ENCODE measurements at regions of chr2 and their contacts with region 1.

Region 1: GRCh38 chr2:120680136-120680761 is 55.4 kb upstream of the GLI2 start:
- DNase-seq: peak; percentile 64 to 77
- ATAC-seq: peak; percentile 82 to 85
- H3K4me3 ChIP-seq: no peak overlapping the region
- H3K27ac ChIP-seq: no peak overlapping the region
- H3K4me1 ChIP-seq: peaks cover 0 to 3% of the 10 kb centered on the region in 2 donors
- H3K27me3 ChIP-seq: peaks cover 0 to 5% (median 0%) of the 10 kb centered on the region in 3 donors
- CTCF ChIP-seq: peak; percentile 61 to 89 (median 73)
- POLR2A ChIP-seq: no peak

Region 2: DNA sequence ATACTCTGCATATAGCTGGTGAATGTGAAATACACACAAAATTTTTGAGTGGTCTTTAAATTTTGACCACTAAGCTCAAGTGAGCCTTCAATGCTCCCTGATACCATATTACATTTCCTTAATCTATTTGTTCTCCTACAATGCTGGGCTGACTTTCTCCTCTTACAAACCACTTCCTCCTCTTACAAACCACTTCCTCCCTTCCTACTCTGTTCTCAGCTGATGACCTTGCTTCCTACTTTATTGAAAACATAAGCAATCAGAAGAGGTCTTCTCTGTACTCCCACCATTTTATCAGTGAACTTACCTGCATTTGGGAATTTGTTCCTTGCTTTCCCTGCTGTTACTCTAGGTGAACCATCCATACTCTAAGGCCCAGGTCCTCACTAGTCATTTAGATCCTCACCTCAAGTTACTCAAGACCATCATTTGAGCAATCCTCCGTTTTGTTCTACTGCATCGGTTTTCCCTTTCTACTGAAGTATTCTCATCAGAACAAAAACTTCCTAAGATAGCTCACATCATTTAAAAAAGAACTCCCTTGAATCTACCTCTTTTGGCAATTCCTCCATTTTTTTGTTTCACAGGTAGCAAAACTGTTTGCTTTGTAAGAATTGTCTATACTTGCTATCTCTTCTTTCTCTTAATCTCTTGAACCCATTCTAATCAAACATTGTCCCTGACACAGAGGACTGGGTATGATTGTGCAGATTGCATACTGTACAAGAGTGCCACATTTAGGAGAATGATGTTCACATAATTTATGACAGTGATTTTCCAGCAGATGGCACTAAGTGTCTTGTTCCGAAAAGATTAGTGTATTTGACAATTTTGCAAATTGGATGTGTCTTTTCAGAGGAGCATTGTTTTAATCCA is 570.8 kb before region 1 on chr2:
- in situ Hi-C with region 1: no loop called
- intact Hi-C with region 1: loop called (anchors 10 kb)
- DNase-seq: no peak
- ATAC-seq: no peak
- H3K4me3 ChIP-seq: no peak overlapping the region
- H3K27ac ChIP-seq: peak overlapping the region in 2 of 4 donors; percentile 7 to 78
- H3K4me1 ChIP-seq: peaks cover 28 to 33% of the 10 kb centered on the region in 2 donors
- H3K27me3 ChIP-seq: no peaks in the 10 kb centered on the region
- CTCF ChIP-seq: peak in 4 of 5 experiments; percentile 31 to 45 (median 38)
- POLR2A ChIP-seq: no peak

Region 3: GRCh38 chr2:120338011-120338410 is 342.2 kb before region 1 on chr2:
- in situ Hi-C with region 1: loop called (anchors 5 kb)
- intact Hi-C with region 1: loop called (anchors 1 kb)
- DNase-seq: no peak
- ATAC-seq: peak; percentile 52 to 79
- H3K4me3 ChIP-seq: no peak overlapping the region
- H3K27ac ChIP-seq: peak overlapping the region in 3 of 4 donors; percentile 32 to 48 (median 38)
- H3K4me1 ChIP-seq: peaks cover under 1 to 2% of the 10 kb centered on the region in 2 donors
- H3K27me3 ChIP-seq: peaks cover 3 to 10% (median 8%) of the 10 kb centered on the region in 3 donors
- CTCF ChIP-seq: no peak
- POLR2A ChIP-seq: no peak

Region 4: DNA sequence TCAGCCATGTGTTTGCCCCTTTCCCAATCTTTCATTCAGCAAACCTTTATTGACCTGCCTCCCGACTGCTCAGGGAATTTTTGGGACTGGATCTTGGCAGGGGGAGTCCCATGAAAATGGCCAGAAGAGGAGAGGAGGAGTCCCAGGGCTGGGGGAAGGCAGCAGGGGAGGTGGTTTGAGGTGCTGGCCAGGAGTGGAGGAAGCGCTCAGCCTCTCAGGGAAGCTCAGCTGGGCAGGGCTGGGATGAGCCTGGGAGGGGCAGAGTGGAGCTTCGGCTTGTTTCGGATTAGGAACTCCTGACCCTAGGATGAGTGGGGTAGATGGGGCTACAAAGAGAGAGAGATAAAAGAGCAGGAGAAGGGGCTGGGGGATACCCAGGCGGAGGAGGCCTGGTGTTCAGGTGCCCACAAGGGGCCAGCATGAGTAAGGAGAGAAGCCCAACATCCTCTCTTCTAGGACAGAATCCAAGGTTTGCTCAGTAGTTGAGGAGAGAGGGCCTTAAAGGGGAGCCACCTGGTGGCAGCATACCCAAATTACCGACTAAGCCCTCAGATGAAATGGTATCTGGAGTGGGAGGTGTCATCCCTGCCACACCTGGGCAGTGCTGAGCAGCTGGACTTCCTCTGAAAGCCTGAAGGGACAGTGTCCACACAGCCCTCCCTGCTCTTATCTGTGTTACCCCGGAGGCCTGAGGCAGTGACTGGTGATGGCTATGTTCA is 243.2 kb before region 1 on chr2:
- in situ Hi-C with region 1: no loop called
- intact Hi-C with region 1: loop called (anchors 10 kb)
- DNase-seq: peak in 1 of 2 donors; percentile 35
- ATAC-seq: peak in 1 of 2 donors; percentile 53
- H3K4me3 ChIP-seq: no peak overlapping the region
- H3K27ac ChIP-seq: peak overlapping the region in 2 of 4 donors; percentile 10 to 22
- H3K4me1 ChIP-seq: peaks cover 3 to 4% of the 10 kb centered on the region in 2 donors
- H3K27me3 ChIP-seq: peaks cover 9 to 22% (median 12%) of the 10 kb centered on the region in 3 donors
- CTCF ChIP-seq: peak in 4 of 5 experiments; percentile 18 to 49 (median 30)
- POLR2A ChIP-seq: no peak

Region 5: DNA sequence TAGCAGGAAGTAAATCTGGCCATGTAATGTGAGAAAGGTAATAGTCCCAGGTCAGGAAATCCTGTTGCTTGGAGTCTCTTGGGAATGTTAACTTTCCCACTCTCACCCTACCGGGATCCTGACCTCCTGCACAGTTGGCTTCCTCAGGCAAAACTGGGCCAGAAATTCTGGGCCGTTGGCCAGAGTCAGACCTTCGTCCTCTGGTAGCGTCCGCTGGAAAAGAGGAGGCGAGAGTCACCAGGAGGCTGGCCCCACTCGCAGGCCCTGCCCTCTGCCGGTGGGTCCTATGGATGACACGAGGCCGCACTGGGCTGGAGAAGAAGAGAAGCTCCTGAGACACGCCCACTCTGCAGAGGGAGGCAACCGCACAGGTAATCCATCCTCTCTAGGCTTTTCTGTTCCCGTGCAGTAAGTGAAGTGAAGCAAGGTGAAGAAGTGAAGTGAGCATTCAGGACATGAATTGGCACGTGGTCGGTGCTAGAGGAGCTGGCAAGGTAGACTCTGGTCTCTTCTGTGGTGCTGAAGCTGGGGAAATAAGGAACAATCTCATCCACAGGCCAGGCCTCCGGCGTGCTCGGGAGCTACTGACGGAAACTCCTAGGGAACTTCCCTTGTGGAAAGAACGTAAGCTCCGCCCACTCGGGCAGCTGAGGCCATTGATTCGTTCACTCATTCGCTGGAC is 127.3 kb before region 1 on chr2:
- in situ Hi-C with region 1: loop called in 1 of 4 experiments (anchors 10 kb)
- intact Hi-C with region 1: no loop called
- DNase-seq: peak; percentile 91 to 97
- ATAC-seq: peak; percentile 77 to 86
- H3K4me3 ChIP-seq: no peak overlapping the region
- H3K27ac ChIP-seq: peak overlapping the region; percentile 65 to 83 (median 76)
- H3K4me1 ChIP-seq: peaks cover 39 to 55% of the 10 kb centered on the region in 2 donors
- H3K27me3 ChIP-seq: no peaks in the 10 kb centered on the region
- CTCF ChIP-seq: peak; percentile 90 to 94 (median 92)
- POLR2A ChIP-seq: peak in 1 of 2 donors; percentile 39